ENCODE measurements at regions of chr10 and their contacts with region 1.

Region 1: GRCh38 chr10:101067356-101068083 is 5.7 kb downstream of the KAZALD1 start:
- DNase-seq: peak; percentile 76 to 78
- H3K4me3 ChIP-seq: peak overlapping the region; percentile 15 to 51 (median 22)
- H3K27ac ChIP-seq: peak overlapping the region in 2 of 3 donors; percentile 22 to 56
- H3K4me1 ChIP-seq: peaks cover 26 to 34% of the 10 kb centered on the region in 2 donors
- H3K27me3 ChIP-seq: no peaks in the 10 kb centered on the region
- CTCF ChIP-seq: peak; percentile 62 to 88 (median 86)
- POLR2A ChIP-seq: peak in 1 of 2 donors; percentile 12

Region 2: DNA sequence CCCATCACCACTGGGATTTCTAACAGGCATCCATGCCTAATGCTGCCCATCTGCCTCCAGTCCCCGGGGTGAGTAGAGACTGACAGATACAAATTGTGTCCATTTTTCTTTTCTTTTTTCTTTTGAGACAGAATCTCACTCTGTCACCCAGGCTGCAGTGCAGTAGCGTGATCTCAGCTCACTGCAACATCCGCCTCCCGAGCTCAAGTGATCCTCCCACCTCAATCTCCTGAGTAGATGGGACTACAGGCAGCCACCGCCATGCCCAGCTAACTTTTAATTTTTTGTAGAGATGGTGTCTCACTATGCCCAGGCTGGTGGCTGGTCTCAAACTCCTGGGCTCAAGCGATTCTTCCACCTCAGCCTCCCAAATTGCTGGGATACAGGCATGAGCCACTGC is 978.3 kb before region 1 on chr10:
- intact Hi-C with region 1: no loop called
- DNase-seq: no peak
- H3K4me3 ChIP-seq: no peak overlapping the region
- H3K27ac ChIP-seq: no peak overlapping the region
- H3K4me1 ChIP-seq: no peaks in the 10 kb centered on the region
- H3K27me3 ChIP-seq: no peaks in the 10 kb centered on the region
- CTCF ChIP-seq: no peak
- POLR2A ChIP-seq: no peak

Region 3: DNA sequence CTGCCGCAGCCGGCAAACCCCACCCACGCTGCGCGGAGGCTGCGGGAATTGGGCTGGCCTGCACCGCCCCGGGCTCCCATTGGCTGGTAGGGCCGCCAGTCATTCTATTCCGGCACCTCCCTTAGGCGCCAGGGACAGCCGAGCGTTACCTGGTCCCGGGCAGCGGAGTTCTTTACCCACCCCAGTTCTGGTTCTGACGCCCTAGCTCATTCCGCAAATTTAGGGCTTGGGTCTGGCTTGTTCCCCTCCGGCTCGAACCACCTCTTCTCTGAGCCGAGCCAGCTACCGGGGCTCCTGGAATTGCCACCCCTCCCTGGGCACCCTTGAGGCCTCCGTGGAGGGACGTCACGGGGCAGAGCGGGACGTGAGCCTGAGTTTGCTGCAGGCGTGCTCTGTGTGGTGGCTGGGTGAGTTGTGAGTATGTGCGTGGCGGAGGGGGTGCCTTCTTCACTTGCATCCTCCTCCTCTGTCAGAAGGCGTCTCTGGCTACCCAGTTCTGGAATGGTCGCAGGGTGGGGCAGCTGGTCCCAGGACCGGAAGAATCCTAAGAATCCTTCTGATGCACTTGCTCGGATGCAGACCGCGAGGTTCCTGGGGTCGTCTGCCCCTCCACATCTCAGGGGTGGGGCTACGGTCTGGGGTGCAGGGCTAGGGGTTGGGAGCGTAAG is 36.3 kb before region 1 on chr10 and contains the starts of genes PDZD7 and SFXN3:
- intact Hi-C with region 1: loop called (anchors 5 kb)
- DNase-seq: peak; percentile 95 to 96
- H3K4me3 ChIP-seq: peak within 1 kb of the TSS; percentile 24 to 84 (median 66)
- H3K27ac ChIP-seq: peak within 1 kb of the TSS; percentile 94 to 99 (median 97)
- H3K4me1 ChIP-seq: peaks cover 22 to 36% of the 10 kb centered on the region in 2 donors
- H3K27me3 ChIP-seq: no peaks in the 10 kb centered on the region
- CTCF ChIP-seq: no peak
- POLR2A ChIP-seq: peak in 1 of 2 donors; percentile 70
- total RNA-seq, gene PDZD7: 0.24 to 1.1 (median 0.69) TPM
- total RNA-seq, gene SFXN3: 35.8 to 56.8 (median 43.3) TPM

Region 4: GRCh38 chr10:101297901-101298486 is 230.5 kb after region 1 on chr10:
- intact Hi-C with region 1: no loop called
- DNase-seq: peak; percentile 57 to 64
- H3K4me3 ChIP-seq: no peak overlapping the region
- H3K27ac ChIP-seq: no peak overlapping the region
- H3K4me1 ChIP-seq: peaks cover 0 to under 1% of the 10 kb centered on the region in 2 donors
- H3K27me3 ChIP-seq: no peaks in the 10 kb centered on the region
- CTCF ChIP-seq: peak; percentile 59 to 90 (median 70)
- POLR2A ChIP-seq: no peak

Measured in thyroid gland (tissue), 4 donors.